ENCODE measurements at regions of chr14 and their contacts with region 1.

Region 1: GRCh38 chr14:65019944-65020566 is 33.4 kb downstream of the FNTB start:
- DNase-seq: peak; percentile 29
- H3K4me3 ChIP-seq: no peak overlapping the region
- CTCF ChIP-seq: peak; percentile 50

Region 2: GRCh38 chr14:64880221-64881121 is 139.6 kb before region 1 on chr14:
- CTCF ChIA-PET with region 1: no interaction called
- POLR2A ChIA-PET with region 1: no interaction called
- DNase-seq: no peak
- H3K4me3 ChIP-seq: peak overlapping the region; percentile 42
- CTCF ChIP-seq: no peak

Region 3: DNA sequence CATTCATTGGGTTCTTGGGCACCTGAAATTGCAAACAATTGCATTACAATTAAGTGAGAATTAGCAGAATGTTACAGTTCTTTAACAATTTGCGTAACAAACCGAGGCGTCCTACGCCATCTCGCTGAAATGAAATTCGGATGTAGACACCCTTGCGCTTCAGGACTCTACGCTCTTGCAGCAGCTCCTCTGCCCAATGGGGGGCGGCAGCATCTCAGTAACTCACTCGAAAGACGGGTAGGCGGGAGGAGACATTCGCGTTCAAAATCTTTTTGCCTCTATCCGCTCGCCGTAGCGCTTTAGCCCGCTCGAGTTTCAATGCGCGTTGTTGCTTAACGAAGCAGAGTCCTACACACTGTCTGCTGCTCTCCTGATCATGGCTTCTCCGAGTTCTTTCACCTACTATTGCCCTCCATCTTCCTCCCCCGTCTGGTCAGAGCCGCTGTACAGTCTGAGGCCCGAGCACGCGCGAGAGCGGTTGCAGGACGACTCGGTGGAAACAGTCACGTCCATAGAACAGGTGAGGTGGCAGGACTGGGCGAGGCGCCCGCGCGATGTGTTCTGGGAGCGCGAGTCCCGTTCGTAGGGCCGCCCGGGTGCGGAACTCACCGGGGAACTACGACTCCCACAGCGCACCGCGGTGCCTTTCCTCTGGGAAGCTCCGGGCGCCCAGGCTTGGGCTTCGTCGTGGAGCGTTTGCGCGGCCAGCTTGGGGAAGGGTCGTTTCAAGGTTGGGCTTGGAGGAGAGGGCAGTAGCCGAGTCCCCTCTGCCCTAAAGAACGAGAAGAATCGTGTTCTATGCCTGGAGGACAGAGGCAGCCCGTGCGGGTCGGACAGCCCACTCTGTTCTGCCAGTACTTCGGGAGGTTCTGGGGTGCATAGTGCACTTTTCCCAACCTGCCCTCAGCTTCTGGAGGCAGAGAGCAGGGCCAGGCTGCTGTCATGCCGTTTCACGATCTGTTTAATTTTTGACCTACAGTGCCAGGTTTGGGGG is 33.2 kb before region 1 on chr14 and contains the start of gene FNTB:
- CTCF ChIA-PET with region 1: interaction called, 277 read pairs
- POLR2A ChIA-PET with region 1: interaction called, 14 read pairs
- DNase-seq: peak; percentile 88
- H3K4me3 ChIP-seq: peak within 1 kb of the TSS; percentile 75
- CTCF ChIP-seq: peak; percentile 89

Region 4: GRCh38 chr14:64997108-64997794 is 22.8 kb before region 1 on chr14:
- CTCF ChIA-PET with region 1: interaction called, 277 read pairs
- POLR2A ChIA-PET with region 1: interaction called, 5 read pairs
- DNase-seq: no peak
- H3K4me3 ChIP-seq: no peak overlapping the region
- CTCF ChIP-seq: no peak

Region 5: GRCh38 chr14:65002586-65003210 is 17.4 kb before region 1 on chr14:
- CTCF ChIA-PET with region 1: interaction called, 70 read pairs
- POLR2A ChIA-PET with region 1: interaction called, 5 read pairs
- DNase-seq: no peak
- H3K4me3 ChIP-seq: no peak overlapping the region
- CTCF ChIP-seq: no peak

Region 6: DNA sequence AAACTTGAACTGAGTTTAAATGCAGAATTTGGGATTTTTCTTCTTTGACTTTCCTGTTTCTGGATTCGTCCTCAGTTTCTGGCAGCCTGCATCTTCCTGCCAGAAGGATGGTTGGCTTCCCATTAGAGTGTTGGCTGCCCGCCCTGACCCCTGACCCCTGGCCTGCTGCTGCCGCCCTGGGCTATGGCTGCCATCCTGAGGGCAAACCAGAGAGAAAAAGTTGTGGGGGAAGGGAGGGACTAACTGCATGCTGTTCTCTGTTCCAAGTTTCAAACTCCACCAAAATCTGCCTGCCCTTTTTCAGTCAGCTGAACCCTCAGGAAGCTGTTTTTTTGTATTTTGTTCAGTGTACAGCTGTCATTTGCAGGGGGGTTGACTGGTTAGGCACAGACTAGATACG is 15.0 kb after region 1 on chr14:
- CTCF ChIA-PET with region 1: interaction called, 17 read pairs
- POLR2A ChIA-PET with region 1: no interaction called
- DNase-seq: no peak
- H3K4me3 ChIP-seq: no peak overlapping the region
- CTCF ChIP-seq: no peak

Region 7: DNA sequence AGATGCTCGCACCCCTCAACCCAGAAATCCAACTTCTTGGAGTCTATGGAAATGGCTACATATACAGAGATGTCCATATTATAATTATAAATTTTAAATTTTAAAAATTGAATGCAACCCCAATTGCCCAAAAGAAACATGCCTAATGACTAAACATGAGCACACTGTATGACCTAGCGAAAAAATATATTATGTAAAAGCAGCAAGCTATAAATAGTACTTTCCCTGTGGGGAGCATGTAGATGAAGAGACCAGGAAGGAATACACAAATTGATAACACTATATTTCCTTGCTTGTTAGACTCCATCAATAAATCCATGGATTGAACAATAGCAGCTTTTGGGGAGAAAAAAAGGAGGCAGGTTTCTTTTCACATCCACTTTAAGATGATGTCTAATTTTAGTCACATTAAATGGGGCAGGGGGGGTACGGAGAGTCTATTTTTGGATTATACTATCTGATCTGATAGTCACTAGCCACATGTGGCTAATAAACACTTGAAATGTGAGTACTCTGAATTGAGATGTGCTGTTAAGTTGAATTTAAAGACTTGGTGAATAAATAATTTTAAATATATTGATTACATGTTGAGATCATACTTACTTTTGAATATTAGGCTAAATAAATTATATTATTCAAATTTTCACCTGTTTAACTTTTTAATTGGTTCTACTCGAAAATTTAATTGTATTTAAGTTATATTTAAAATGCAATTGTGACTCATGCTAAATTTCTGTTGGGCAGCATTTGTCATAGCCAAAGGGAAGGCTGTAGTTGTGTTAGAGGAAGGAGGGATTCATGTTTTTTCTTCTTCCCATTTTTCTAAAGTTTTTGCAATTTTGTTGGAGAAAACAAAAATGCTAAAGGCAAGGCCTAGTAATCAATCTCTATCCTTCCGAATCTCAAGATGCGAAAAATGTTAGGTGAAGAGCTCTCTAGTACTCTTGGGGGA is 64.8 kb after region 1 on chr14:
- CTCF ChIA-PET with region 1: no interaction called
- POLR2A ChIA-PET with region 1: no interaction called
- DNase-seq: no peak
- H3K4me3 ChIP-seq: no peak overlapping the region
- CTCF ChIP-seq: no peak

Measured in AG04449 (cell line).